ENCODE measurements at regions of chr19 and their contacts with region 1.

Region 1: GRCh38 chr19:18846862-18847548 is 15.2 kb downstream of the UPF1 start:
- DNase-seq: peak; percentile 65 to 87 (median 78)
- ATAC-seq: peak; percentile 74 to 91 (median 90)
- H3K4me3 ChIP-seq: no peak overlapping the region
- H3K27ac ChIP-seq: peak overlapping the region in 2 of 4 donors; percentile 0 to 45
- H3K4me1 ChIP-seq: peaks cover 0 to 18% (median 6%) of the 10 kb centered on the region in 3 donors
- H3K27me3 ChIP-seq: no peaks in the 10 kb centered on the region
- CTCF ChIP-seq: peak; percentile 44 to 78 (median 65)

Region 2: DNA sequence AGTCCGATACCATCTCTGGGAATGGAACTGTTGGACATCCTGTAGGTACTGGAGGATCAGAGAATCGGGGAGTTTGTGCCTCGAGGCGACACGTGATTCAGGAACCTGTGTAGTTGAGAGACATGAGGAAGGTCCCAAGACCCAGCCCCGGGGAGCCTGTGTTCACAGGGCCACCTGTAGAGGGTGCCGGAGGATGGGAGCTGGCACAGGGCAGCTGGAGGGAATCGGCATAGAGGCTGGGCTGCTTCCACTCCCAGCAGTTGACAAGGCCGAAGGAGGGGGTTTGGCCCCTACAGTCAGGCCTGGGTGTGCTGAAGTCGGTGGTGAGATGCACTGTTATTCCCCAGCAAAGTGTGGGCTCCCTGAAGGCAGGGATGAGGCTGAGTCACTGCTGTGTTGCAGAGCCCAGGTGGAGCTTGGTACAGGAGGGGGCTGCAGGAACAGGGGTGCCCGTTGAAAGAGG is 406.6 kb before region 1 on chr19:
- intact Hi-C with region 1: loop called in 1 of 3 experiments (anchors 10 kb)
- DNase-seq: peak in 1 of 6 donors; percentile 51
- ATAC-seq: no peak
- H3K4me3 ChIP-seq: no peak overlapping the region
- H3K27ac ChIP-seq: peak overlapping the region in 2 of 4 donors; percentile 46 to 79
- H3K4me1 ChIP-seq: peaks cover 0 to 11% (median 0%) of the 10 kb centered on the region in 3 donors
- H3K27me3 ChIP-seq: no peaks in the 10 kb centered on the region
- CTCF ChIP-seq: no peak

Region 3: GRCh38 chr19:18596752-18597157 is 250.2 kb before region 1 on chr19:
- intact Hi-C with region 1: loop called in 1 of 3 experiments (anchors 5 kb)
- DNase-seq: peak; percentile 56 to 91 (median 74)
- ATAC-seq: peak; percentile 53 to 85 (median 80)
- H3K4me3 ChIP-seq: no peak overlapping the region
- H3K27ac ChIP-seq: no peak overlapping the region
- H3K4me1 ChIP-seq: peaks cover 0 to 10% (median 8%) of the 10 kb centered on the region in 3 donors
- H3K27me3 ChIP-seq: no peaks in the 10 kb centered on the region
- CTCF ChIP-seq: no peak

Measured in pancreas (tissue), 10 donors.